CD4-positive, alpha-beta memory T cell (primary cell): ENCODE measurements at regions of chr15 and their contacts with region 1.

Region 1: DNA sequence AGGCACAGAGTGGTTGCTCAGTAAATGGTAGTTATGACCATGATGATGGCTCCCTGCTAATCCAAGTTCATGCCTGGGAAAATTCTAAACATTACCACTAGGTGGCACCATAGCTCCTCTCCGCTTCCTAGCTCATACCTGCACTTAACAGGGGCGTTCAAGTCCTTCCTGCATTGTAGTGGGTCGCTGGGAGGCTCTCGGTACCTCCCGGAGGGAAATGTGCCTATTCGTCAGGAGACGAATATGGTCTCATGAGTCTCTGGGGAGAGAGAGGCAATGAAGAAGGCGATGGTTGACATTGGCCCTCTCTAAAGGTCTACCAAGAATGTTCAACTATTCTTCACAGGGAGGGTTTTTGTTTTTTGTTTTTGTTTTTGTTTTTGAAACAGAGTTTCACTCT is 10.9 kb downstream of the MESP1 start:
- DNase-seq: peak; percentile 50 to 67 (median 64)
- H3K4me3 ChIP-seq: no peak overlapping the region
- H3K4me3 Mint-ChIP-seq: no peak overlapping the region
- H3K27ac ChIP-seq: no peak overlapping the region
- H3K27ac Mint-ChIP-seq: no peak overlapping the region
- H3K4me1 ChIP-seq: no peaks in the 10 kb centered on the region
- H3K4me1 Mint-ChIP-seq: peaks cover 0 to 7% (median 2%) of the 10 kb centered on the region in 4 donors
- H3K27me3 ChIP-seq: no peaks in the 10 kb centered on the region
- H3K27me3 Mint-ChIP-seq: peaks cover 9 to 12% of the 10 kb centered on the region in 2 donors

Region 2: GRCh38 chr15:89514596-89515406 is 225.3 kb before region 1 on chr15:
- CTCF ChIA-PET with region 1: no interaction called
- POLR2A ChIA-PET with region 1: no interaction called
- intact Hi-C with region 1: no loop called
- DNase-seq: no peak
- H3K4me3 ChIP-seq: no peak overlapping the region
- H3K4me3 Mint-ChIP-seq: no peak overlapping the region
- H3K27ac ChIP-seq: no peak overlapping the region
- H3K27ac Mint-ChIP-seq: no peak overlapping the region
- H3K4me1 ChIP-seq: no peaks in the 10 kb centered on the region
- H3K4me1 Mint-ChIP-seq: no peaks in the 10 kb centered on the region
- H3K27me3 ChIP-seq: no peaks in the 10 kb centered on the region
- H3K27me3 Mint-ChIP-seq: peaks cover 17 to 35% of the 10 kb centered on the region in 2 donors

Region 3: GRCh38 chr15:89750560-89751542 is 10.7 kb after region 1 on chr15 and contains the start of gene MESP1:
- CTCF ChIA-PET with region 1: interaction called, 15 read pairs
- POLR2A ChIA-PET with region 1: interaction called, 5 read pairs
- intact Hi-C with region 1: no loop called
- DNase-seq: peak; percentile 80 to 86 (median 86)
- H3K4me3 ChIP-seq: peak within 1 kb of the TSS in 1 of 2 donors; percentile 58
- H3K4me3 Mint-ChIP-seq: peak within 1 kb of the TSS; percentile 68 to 83 (median 76)
- H3K27ac ChIP-seq: peak within 1 kb of the TSS; percentile 27
- H3K27ac Mint-ChIP-seq: peak within 1 kb of the TSS in 1 of 7 donors; percentile 35
- H3K4me1 ChIP-seq: peaks cover 9% of the 10 kb centered on the region
- H3K4me1 Mint-ChIP-seq: peaks cover 0 to 6% (median 0%) of the 10 kb centered on the region in 4 donors
- H3K27me3 ChIP-seq: no peaks in the 10 kb centered on the region
- H3K27me3 Mint-ChIP-seq: peaks cover 3 to 8% of the 10 kb centered on the region in 2 donors
- total RNA-seq, gene MESP1: 0.53 to 0.79 TPM

Region 4: GRCh38 chr15:90086868-90087268 is 346.7 kb after region 1 on chr15:
- CTCF ChIA-PET with region 1: interaction called, 10 read pairs
- POLR2A ChIA-PET with region 1: no interaction called
- intact Hi-C with region 1: no loop called
- DNase-seq: peak in 2 of 5 donors; percentile 45 to 50
- H3K4me3 ChIP-seq: no peak overlapping the region
- H3K4me3 Mint-ChIP-seq: peak overlapping the region in 1 of 8 donors; percentile 2
- H3K27ac ChIP-seq: no peak overlapping the region
- H3K27ac Mint-ChIP-seq: peak overlapping the region; percentile 56 to 86 (median 72)
- H3K4me1 ChIP-seq: no peaks in the 10 kb centered on the region
- H3K4me1 Mint-ChIP-seq: peaks cover 6 to 24% (median 7%) of the 10 kb centered on the region in 4 donors
- H3K27me3 ChIP-seq: no peaks in the 10 kb centered on the region
- H3K27me3 Mint-ChIP-seq: no peaks in the 10 kb centered on the region